HepG2 (cell line): ENCODE measurements at regions of chr6 and their contacts with region 1.

Region 1: GRCh38 chr6:7107578-7108195 is at the start of gene RREB1:
- DNase-seq: peak; percentile 67
- ATAC-seq: peak; percentile 64
- H3K4me3 ChIP-seq: peak within 1 kb of the TSS; percentile 91 to 98 (median 97)
- H3K27ac ChIP-seq: peak within 1 kb of the TSS; percentile 89
- H3K4me1 ChIP-seq: peaks cover 42% of the 10 kb centered on the region
- H3K27me3 ChIP-seq: no peaks in the 10 kb centered on the region; a peak in 1 of 5 replicates
- CTCF ChIP-seq: no peak
- EP300 ChIP-seq: 0 out of 4 replicates have a peak, but pooled peaks of 1 of the 2 experiments have one; percentile 4
- POLR2A ChIP-seq: peak; percentile 58 to 83
- RAD21 ChIP-seq: no peak
- total RNA-seq, gene RREB1: 23.2 and 23.4 TPM in 2 replicates

Region 2: GRCh38 chr6:6724539-6725467 is 382.9 kb before region 1 on chr6:
- CTCF ChIA-PET with region 1: no interaction called
- POLR2A ChIA-PET with region 1: no interaction called
- in situ Hi-C with region 1: no loop called
- intact Hi-C with region 1: loop called (anchors 10 kb)
- DNase-seq: peak; percentile 51
- ATAC-seq: peak; percentile 90
- H3K4me3 ChIP-seq: peak overlapping the region; percentile 26 to 75 (median 31)
- H3K27ac ChIP-seq: no peak overlapping the region
- H3K4me1 ChIP-seq: peaks cover 31% of the 10 kb centered on the region
- H3K27me3 ChIP-seq: peaks cover 0 to 4% of the 10 kb centered on the region in 2 experiments; a peak in 2 of 5 replicates
- CTCF ChIP-seq: peak; percentile 90
- EP300 ChIP-seq: no peak
- POLR2A ChIP-seq: no peak
- RAD21 ChIP-seq: peak; percentile 74

Region 3: DNA sequence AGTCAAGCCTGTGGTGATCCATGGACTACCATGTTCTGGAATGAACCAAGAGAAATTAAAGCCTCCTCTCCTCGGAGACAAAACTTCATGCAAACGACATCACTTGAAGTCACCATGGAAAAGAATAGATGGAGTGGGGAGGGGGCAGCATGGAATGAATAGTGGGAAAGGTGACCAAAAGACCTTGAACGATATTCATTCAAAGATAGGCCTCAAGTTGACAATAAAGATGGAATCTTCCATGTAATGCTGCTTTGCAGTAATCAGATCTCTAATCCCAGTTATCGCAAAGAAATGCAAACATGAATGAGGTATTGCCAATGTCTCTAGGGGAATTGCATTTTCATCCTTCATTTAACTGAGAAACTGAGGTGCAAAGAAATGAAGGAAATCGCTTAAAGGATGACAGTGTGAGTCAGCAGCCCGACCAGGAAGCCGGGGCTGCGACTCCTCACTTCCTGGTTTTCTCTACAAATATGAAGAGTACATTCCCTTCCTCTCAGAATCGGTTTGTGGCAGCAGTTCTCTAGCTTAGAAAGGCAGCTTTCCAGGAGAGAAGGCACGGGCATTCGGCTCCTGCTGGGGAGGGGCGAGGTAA is 65.5 kb before region 1 on chr6:
- CTCF ChIA-PET with region 1: no interaction called
- POLR2A ChIA-PET with region 1: interaction called, 9 read pairs
- in situ Hi-C with region 1: no loop called
- intact Hi-C with region 1: loop called (anchors 2 kb)
- DNase-seq: peak; percentile 46
- ATAC-seq: peak; percentile 72
- H3K4me3 ChIP-seq: peak overlapping the region; percentile 17 to 58 (median 39)
- H3K27ac ChIP-seq: peak overlapping the region; percentile 81
- H3K4me1 ChIP-seq: peaks cover 25% of the 10 kb centered on the region
- H3K27me3 ChIP-seq: peaks cover 0 to 2% of the 10 kb centered on the region in 2 experiments; a peak in 1 of 5 replicates
- CTCF ChIP-seq: peak; percentile 16; the same call in 1 of the 2 replicates
- EP300 ChIP-seq: no peak; a peak in 1 of 4 replicates
- POLR2A ChIP-seq: no peak
- RAD21 ChIP-seq: no peak

Region 4: GRCh38 chr6:7145885-7146828 is 38.5 kb after region 1 on chr6:
- CTCF ChIA-PET with region 1: no interaction called
- POLR2A ChIA-PET with region 1: interaction called, 18 read pairs
- in situ Hi-C with region 1: no loop called
- intact Hi-C with region 1: no loop called
- DNase-seq: peak; percentile 84
- ATAC-seq: peak; percentile 77
- H3K4me3 ChIP-seq: peak overlapping the region in 1 of 3 experiments; percentile 32; a peak in 2 of 6 replicates
- H3K27ac ChIP-seq: peak overlapping the region; percentile 66
- H3K4me1 ChIP-seq: peaks cover 100% of the 10 kb centered on the region
- H3K27me3 ChIP-seq: no peaks in the 10 kb centered on the region
- CTCF ChIP-seq: no peak
- EP300 ChIP-seq: no peak
- POLR2A ChIP-seq: no peak
- RAD21 ChIP-seq: no peak

Region 5: GRCh38 chr6:7238900-7239589 is 131.4 kb after region 1 on chr6:
- CTCF ChIA-PET with region 1: no interaction called
- POLR2A ChIA-PET with region 1: no interaction called
- in situ Hi-C with region 1: no loop called
- intact Hi-C with region 1: loop called (anchors 1 kb)
- DNase-seq: peak; percentile 94
- ATAC-seq: peak; percentile 80
- H3K4me3 ChIP-seq: peak overlapping the region in 1 of 3 experiments; percentile 34; a peak in 2 of 6 replicates
- H3K27ac ChIP-seq: peak overlapping the region; percentile 90
- H3K4me1 ChIP-seq: peaks cover 99% of the 10 kb centered on the region
- H3K27me3 ChIP-seq: no peaks in the 10 kb centered on the region
- CTCF ChIP-seq: peak; percentile 98
- EP300 ChIP-seq: peak; percentile 43 to 72; a peak in 2 of 4 replicates
- POLR2A ChIP-seq: peak in 1 of 2 experiments; percentile 58; a peak in 2 of 4 replicates
- RAD21 ChIP-seq: peak; percentile 87